B cell (primary cell): ENCODE measurements at regions of chr1 and their contacts with region 1.

Region 1: DNA sequence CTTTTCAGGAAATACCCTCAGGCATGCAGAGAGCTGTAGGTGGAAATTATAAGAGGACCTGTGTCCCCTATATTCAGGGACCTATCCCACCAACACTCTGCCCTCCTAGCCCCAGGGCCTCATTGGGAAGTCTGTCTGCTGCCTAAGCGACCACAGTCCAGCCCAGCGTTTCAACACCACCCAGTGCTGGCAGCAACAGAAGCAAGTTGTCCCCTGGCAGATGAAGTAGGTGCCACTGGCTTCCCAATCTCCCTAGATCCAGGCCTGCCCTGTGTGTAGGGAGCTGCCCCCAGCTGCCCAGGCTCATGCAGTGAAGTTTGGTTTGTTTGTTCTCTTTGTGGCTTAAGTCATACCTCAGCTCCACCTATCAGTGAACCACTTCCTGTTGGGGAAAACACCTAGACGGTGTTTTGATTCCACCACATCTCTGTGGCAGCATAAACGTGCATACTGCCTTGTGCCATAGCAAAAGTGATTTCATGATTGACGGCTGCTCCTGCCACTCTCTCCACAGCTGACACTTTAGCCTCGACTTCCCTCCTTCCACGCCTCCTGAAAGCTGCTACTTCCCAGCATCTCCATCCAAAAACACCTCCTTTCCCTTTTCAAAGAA is 8.1 kb upstream of the LEFTY1 start:
- DNase-seq: peak; percentile 89
- ATAC-seq: peak; percentile 98
- H3K4me3 ChIP-seq: peak overlapping the region in 1 of 5 experiments; percentile 26
- H3K4me3 Mint-ChIP-seq: peak overlapping the region; percentile 71
- H3K27ac ChIP-seq: peak overlapping the region; percentile 86 to 97
- H3K27ac Mint-ChIP-seq: peak overlapping the region; percentile 98
- H3K4me1 ChIP-seq: peaks cover 34 to 36% of the 10 kb centered on the region in 2 donors
- H3K4me1 Mint-ChIP-seq: peaks cover 36% of the 10 kb centered on the region
- H3K27me3 ChIP-seq: no peaks in the 10 kb centered on the region
- H3K27me3 Mint-ChIP-seq: no peaks in the 10 kb centered on the region
- CTCF ChIP-seq: no peak

Region 2: DNA sequence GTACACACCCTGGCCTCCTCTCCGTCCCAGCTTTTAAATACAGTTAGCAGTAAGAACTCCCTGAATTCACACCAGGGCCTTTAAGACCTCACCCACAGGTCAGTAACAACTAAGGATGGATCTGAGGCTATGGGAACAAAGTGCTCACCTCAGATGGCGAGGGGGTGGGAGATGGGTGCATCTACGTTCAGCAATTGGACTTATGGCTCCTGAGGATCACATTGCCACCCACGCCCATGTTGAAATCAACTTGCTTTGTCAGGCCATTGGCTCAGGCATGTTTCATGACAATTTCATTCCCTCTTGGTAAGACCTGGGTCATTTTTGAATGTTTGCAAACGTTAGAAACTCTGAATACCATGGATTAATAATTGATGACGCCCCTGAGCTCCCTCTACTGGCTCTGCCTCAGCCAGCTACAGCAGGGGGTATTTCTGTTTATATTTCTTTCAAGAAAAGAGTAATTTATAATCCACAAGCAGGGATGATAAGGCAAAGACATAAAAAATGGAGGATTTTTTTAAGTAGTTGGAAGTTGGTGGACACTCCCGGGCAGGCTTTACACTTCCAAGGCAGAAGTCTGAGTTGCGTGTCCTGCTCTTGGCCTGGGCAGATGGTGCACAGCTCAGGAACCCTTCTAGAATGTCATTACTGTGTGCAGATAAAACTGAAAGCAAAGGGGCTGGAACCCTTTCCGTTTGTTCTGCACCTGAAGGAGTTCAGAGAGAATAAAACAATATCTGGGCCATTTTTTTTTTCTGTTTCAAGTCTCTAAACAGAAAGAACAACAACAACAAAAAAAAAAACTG is 455.5 kb before region 1 on chr1:
- CTCF ChIA-PET with region 1: no interaction called
- POLR2A ChIA-PET with region 1: no interaction called
- intact Hi-C with region 1: loop called (anchors 1 kb)
- DNase-seq: no peak
- ATAC-seq: no peak
- H3K4me3 ChIP-seq: peak overlapping the region in 1 of 5 experiments; percentile 6
- H3K4me3 Mint-ChIP-seq: peak overlapping the region; percentile 5
- H3K27ac ChIP-seq: peak overlapping the region in 1 of 2 donors; percentile 48
- H3K27ac Mint-ChIP-seq: peak overlapping the region; percentile 38
- H3K4me1 ChIP-seq: peaks cover 42 to 59% of the 10 kb centered on the region in 2 donors
- H3K4me1 Mint-ChIP-seq: peaks cover 56% of the 10 kb centered on the region
- H3K27me3 ChIP-seq: no peaks in the 10 kb centered on the region
- H3K27me3 Mint-ChIP-seq: no peaks in the 10 kb centered on the region
- CTCF ChIP-seq: peak; percentile 22

Region 3: DNA sequence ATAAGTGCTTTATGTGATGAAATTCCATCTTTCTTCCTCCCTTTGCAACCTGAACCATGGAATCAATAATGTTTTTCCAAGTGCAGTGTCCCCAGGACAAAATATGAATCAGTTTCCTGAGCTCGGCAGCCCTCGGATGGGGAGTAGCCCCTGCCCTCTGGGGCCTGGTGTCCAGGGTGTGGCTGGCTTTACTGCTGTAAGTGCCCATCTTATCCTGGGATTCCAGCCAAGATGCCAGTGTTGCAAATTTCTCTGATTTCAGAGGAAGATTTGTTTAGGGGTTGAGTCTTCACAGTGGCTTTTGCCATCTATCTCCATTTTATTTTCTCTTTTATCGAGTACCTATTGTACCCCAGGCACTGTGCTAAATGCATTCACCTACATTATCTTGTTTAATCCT is 159.8 kb before region 1 on chr1:
- CTCF ChIA-PET with region 1: no interaction called
- POLR2A ChIA-PET with region 1: no interaction called
- intact Hi-C with region 1: no loop called
- DNase-seq: no peak
- ATAC-seq: no peak
- H3K4me3 ChIP-seq: no peak overlapping the region
- H3K4me3 Mint-ChIP-seq: no peak overlapping the region
- H3K27ac ChIP-seq: no peak overlapping the region
- H3K27ac Mint-ChIP-seq: no peak overlapping the region
- H3K4me1 ChIP-seq: no peaks in the 10 kb centered on the region
- H3K4me1 Mint-ChIP-seq: no peaks in the 10 kb centered on the region
- H3K27me3 ChIP-seq: no peaks in the 10 kb centered on the region
- H3K27me3 Mint-ChIP-seq: no peaks in the 10 kb centered on the region
- CTCF ChIP-seq: no peak

Region 4: GRCh38 chr1:225845571-225846259 is 51.3 kb before region 1 on chr1:
- CTCF ChIA-PET with region 1: no interaction called
- POLR2A ChIA-PET with region 1: interaction called, 6 read pairs
- intact Hi-C with region 1: loop called (anchors 1 kb)
- DNase-seq: no peak
- ATAC-seq: no peak
- H3K4me3 ChIP-seq: no peak overlapping the region
- H3K4me3 Mint-ChIP-seq: no peak overlapping the region
- H3K27ac ChIP-seq: peak overlapping the region in 1 of 2 donors; percentile 87
- H3K27ac Mint-ChIP-seq: peak overlapping the region; percentile 98
- H3K4me1 ChIP-seq: peaks cover 41 to 47% of the 10 kb centered on the region in 2 donors
- H3K4me1 Mint-ChIP-seq: peaks cover 47% of the 10 kb centered on the region
- H3K27me3 ChIP-seq: no peaks in the 10 kb centered on the region
- H3K27me3 Mint-ChIP-seq: no peaks in the 10 kb centered on the region
- CTCF ChIP-seq: no peak

Region 5: GRCh38 chr1:225881969-225882693 is 14.9 kb before region 1 on chr1 and contains the start of gene TMEM63A:
- CTCF ChIA-PET with region 1: interaction called, 40 read pairs
- POLR2A ChIA-PET with region 1: interaction called, 38 read pairs
- intact Hi-C with region 1: loop called (anchors 1 kb)
- DNase-seq: peak; percentile 91
- ATAC-seq: peak; percentile 78
- H3K4me3 ChIP-seq: peak within 1 kb of the TSS; percentile 86 to 99 (median 96)
- H3K4me3 Mint-ChIP-seq: peak within 1 kb of the TSS; percentile 96
- H3K27ac ChIP-seq: peak within 1 kb of the TSS; percentile 51 to 74
- H3K27ac Mint-ChIP-seq: peak within 1 kb of the TSS; percentile 91
- H3K4me1 ChIP-seq: peaks cover 30 to 42% of the 10 kb centered on the region in 2 donors
- H3K4me1 Mint-ChIP-seq: peaks cover 48% of the 10 kb centered on the region
- H3K27me3 ChIP-seq: no peaks in the 10 kb centered on the region
- H3K27me3 Mint-ChIP-seq: no peaks in the 10 kb centered on the region
- CTCF ChIP-seq: peak; percentile 23
- total RNA-seq, gene TMEM63A: 238 and 267 TPM in 2 replicates

Region 6: DNA sequence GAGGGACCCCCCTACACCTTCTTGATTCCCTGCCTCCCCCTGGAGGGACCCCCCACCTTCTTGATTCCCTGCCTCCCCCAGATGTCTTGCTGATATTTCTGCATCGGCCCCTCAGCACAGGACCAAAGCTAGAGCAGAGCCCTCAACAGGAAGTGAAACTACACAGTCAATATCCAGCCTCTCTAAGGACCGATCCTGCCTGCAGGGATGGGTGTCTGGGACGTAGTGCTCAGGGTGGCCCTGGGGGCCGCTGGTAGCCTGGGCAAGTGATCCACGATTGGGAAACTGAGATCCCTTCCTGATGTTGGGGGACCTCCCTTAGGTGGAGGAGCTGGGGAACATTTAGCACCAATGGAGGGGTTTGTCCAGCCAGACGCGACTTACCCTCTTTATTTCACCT is 47.9 kb after region 1 on chr1:
- CTCF ChIA-PET with region 1: no interaction called
- POLR2A ChIA-PET with region 1: interaction called, 3 read pairs
- intact Hi-C with region 1: loop called (anchors 1 kb)
- DNase-seq: peak; percentile 75
- ATAC-seq: peak; percentile 85
- H3K4me3 ChIP-seq: no peak overlapping the region
- H3K4me3 Mint-ChIP-seq: no peak overlapping the region
- H3K27ac ChIP-seq: no peak overlapping the region
- H3K27ac Mint-ChIP-seq: no peak overlapping the region
- H3K4me1 ChIP-seq: peaks cover 8 to 11% of the 10 kb centered on the region in 2 donors
- H3K4me1 Mint-ChIP-seq: peaks cover 11% of the 10 kb centered on the region
- H3K27me3 ChIP-seq: peaks cover 0 to 15% (median 0%) of the 10 kb centered on the region in 4 experiments
- H3K27me3 Mint-ChIP-seq: peaks cover 21% of the 10 kb centered on the region
- CTCF ChIP-seq: no peak